ENCODE measurements at regions of chr11 and their contacts with region 1.

Region 1: DNA sequence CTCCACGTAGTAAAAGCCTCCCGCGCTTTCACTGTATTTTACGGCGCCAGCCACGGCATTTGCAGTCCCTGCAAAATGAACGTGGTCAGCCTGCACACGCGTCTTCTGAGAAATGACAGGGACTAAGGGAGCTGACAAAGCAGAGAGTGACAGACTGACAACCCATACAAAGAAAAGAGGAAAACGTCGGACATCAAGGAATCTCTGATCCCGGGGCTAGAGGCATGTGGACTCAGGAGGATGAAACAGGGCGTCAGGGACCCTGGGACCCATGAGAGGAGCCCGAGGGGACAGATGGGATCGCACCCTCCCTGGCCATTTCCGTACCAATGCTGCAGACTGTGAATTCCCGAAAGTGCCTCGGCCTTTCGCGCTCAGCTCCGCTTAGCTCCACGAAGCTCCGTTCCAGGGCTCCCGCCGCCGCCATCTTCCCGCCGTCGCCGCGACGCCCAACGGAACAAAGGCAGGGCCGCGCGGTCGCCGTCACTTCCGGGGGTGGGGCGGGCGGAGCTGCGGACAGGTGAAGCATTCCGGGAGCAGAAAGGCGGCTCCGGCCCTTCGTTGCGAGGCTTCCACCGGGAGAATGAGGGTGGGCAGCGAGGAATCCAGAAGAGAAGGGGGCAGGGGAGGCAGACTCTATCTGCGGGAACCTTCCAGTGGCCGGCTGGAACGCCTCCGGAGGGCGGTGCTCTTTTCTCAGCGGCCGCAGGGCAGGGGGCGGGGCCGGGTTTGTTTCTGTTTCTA is at the start of gene NUP160:
- DNase-seq: no peak
- H3K4me3 ChIP-seq: peak within 1 kb of the TSS; percentile 99
- H3K27ac ChIP-seq: peak within 1 kb of the TSS; percentile 61
- H3K27me3 ChIP-seq: no peaks in the 10 kb centered on the region
- CTCF ChIP-seq: no peak; the same call in 1 of the 2 replicates
- polyA plus RNA-seq, gene NUP160: 26.8 and 31.3 TPM in 2 replicates

Region 2: GRCh38 chr11:47532597-47533213 is 315.4 kb before region 1 on chr11:
- CTCF ChIA-PET with region 1: no interaction called
- POLR2A ChIA-PET with region 1: interaction called, 13 read pairs
- DNase-seq: no peak
- H3K4me3 ChIP-seq: no peak overlapping the region
- H3K27ac ChIP-seq: no peak overlapping the region
- H3K27me3 ChIP-seq: no peaks in the 10 kb centered on the region
- CTCF ChIP-seq: no peak

Region 3: GRCh38 chr11:47675851-47676250 is 172.2 kb before region 1 on chr11:
- CTCF ChIA-PET with region 1: no interaction called
- POLR2A ChIA-PET with region 1: no interaction called
- DNase-seq: no peak
- H3K4me3 ChIP-seq: no peak overlapping the region
- H3K27ac ChIP-seq: no peak overlapping the region
- H3K27me3 ChIP-seq: no peaks in the 10 kb centered on the region
- CTCF ChIP-seq: no peak